Heart right ventricle (tissue), 16 donors: ENCODE measurements at regions of chr6 and their contacts with region 1.

Region 1: DNA sequence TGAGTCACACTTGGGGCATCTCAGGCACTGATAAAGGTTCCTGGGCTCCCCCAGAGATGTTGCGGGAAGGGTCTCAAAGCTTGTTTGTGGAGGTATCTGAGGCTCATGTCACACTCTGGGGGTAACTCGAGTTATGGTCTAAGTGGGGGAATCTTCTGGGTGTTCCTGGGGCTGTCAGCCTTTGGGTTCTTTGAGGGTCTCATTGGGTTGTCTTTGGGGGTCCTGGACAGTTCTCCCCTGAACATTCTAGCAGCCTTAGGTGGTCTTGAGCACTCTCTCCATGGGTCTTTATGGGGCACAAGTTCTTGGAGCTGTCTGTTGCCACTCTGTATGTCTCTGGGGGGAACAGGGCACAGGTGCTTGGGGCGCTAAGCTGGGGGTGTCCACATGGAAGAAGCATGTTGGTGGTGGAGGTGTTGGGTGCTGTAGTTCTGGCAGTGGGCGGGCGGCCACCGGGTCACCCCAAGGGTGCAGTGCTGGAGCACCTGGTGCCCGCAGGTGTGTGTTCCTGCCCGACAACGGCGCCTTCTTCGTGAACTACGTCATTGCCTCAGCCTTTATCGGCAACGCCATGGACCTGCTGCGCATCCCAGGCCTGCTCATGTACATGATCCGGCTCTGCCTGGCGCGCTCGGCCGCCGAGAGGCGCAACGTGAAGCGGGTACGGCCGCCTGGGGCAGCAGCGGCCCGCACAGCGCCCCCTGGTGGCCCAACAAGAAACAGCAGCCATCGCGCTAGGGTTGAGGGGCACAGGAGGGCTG is 7.1 kb upstream of the CAPN11 start:
- DNase-seq: peak; percentile 62 to 78
- ATAC-seq: peak; percentile 74 to 85 (median 78)
- H3K4me3 ChIP-seq: no peak overlapping the region
- H3K27ac ChIP-seq: no peak overlapping the region
- H3K4me1 ChIP-seq: peaks cover 0 to 22% (median 4%) of the 10 kb centered on the region in 9 donors
- H3K27me3 ChIP-seq: no peaks in the 10 kb centered on the region
- CTCF ChIP-seq: peak; percentile 98 to 100 (median 99)

Region 2: GRCh38 chr6:42864602-42865001 is 1286.9 kb before region 1 on chr6:
- intact Hi-C with region 1: no loop called
- DNase-seq: no peak
- ATAC-seq: no peak
- H3K4me3 ChIP-seq: no peak overlapping the region
- H3K27ac ChIP-seq: no peak overlapping the region
- H3K4me1 ChIP-seq: no peaks in the 10 kb centered on the region
- H3K27me3 ChIP-seq: no peaks in the 10 kb centered on the region
- CTCF ChIP-seq: no peak

Region 3: DNA sequence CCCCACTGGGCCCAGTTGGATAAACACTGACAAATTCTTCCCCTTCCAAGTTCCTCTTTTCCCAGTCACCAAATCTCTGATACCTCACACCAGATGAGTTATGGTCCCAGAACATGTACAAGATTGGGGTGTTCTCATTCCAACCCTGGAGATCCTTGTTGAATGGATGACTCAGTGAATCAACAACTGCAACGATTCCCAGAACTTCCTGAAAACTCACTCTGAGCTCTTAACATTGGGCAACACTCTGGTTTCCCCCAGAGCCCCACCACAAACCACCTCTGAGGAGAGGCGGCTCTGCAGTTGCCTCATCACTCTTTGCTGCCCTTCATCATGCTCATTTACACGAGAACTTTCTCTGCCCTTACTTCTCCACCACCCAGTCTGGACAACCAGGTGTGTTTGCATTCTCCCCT is 139.4 kb before region 1 on chr6:
- intact Hi-C with region 1: no loop called
- DNase-seq: no peak
- ATAC-seq: no peak
- H3K4me3 ChIP-seq: no peak overlapping the region
- H3K27ac ChIP-seq: peak overlapping the region in 2 of 10 donors; percentile 80 to 82
- H3K4me1 ChIP-seq: peaks cover 0 to 28% (median 14%) of the 10 kb centered on the region in 9 donors
- H3K27me3 ChIP-seq: peaks cover 0 to 7% (median 0%) of the 10 kb centered on the region in 7 donors
- CTCF ChIP-seq: no peak

Region 4: DNA sequence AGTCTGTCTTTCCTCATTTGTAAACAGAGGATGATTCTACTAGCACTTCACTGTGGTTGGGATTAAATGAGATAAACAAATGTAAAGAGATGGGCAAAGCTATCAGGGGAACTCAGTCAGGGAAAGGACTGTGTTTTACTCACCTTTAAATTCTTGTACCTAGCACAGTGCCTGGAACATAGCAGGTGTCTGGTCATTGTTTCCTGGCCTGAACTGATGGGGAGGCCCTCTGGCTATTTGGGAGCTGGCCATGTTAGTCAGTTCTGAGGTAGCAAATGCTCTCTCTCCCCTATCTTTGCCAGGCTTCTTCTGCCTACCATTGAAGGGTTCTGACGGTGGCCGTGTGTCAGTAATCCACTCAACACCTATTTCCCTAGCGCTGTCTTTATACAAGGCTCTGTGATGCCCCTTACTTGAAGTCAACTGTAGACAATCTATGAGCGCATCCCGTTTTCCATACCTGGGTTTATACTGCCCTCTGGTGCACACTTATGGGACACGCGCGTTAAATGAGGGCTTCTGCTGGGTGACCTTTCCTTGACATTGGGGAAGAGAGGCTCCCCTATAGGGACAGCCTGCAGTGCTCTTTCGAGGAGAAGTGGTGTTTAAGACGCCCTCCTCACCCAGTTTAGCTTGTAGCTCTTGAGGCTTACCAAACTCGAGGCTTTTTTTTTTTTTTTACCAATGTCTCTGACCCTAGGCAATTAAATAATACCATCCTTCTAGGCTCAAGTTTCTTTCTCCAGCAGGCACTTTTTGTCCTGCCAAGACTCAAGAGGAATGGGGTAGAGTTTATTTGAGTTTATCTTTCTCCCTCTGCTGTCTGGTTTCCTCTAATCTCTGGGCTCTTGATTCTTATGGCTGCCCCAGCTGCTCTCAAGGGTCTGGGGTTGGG is 186.9 kb after region 1 on chr6:
- intact Hi-C with region 1: loop called in 2 of 10 experiments (anchors 10 kb)
- DNase-seq: peak; percentile 35 to 53
- ATAC-seq: peak; percentile 67 to 83 (median 74)
- H3K4me3 ChIP-seq: no peak overlapping the region
- H3K27ac ChIP-seq: no peak overlapping the region
- H3K4me1 ChIP-seq: peaks cover 0 to 13% (median 5%) of the 10 kb centered on the region in 9 donors
- H3K27me3 ChIP-seq: peaks cover 0 to 33% (median 11%) of the 10 kb centered on the region in 7 donors
- CTCF ChIP-seq: peak; percentile 48 to 76 (median 72)